ENCODE measurements at regions of chr5 and their contacts with region 1.

Region 1: GRCh38 chr5:42787845-42788244 is 23.8 kb downstream of the SELENOP start:
- DNase-seq: no peak
- H3K4me3 ChIP-seq: no peak overlapping the region
- H3K27ac ChIP-seq: no peak overlapping the region
- H3K4me1 ChIP-seq: no peaks in the 10 kb centered on the region
- H3K27me3 ChIP-seq: no peaks in the 10 kb centered on the region
- CTCF ChIP-seq: no peak
- POLR2A ChIP-seq: no peak

Region 2: DNA sequence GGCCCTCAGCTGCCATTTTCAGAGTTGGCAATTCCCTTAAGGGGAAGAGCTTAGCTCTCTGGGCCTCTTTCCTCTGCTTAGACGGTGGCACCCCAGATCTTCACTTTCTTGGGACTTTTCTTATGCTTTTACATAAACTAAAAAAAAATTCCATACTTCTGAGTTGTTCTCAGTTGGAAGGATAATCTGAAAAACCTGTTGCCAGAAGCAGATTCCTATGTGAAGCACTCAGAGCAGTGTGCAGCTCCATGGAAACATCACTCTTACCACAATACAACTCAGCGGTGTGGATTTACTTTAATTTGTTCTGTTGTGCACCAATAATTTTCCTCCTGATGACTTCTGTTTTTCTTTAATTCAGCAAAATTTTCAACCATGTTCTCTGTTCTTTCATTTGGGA is 1672.6 kb before region 1 on chr5:
- intact Hi-C with region 1: loop called (anchors 5 kb)
- DNase-seq: no peak
- H3K4me3 ChIP-seq: no peak overlapping the region
- H3K27ac ChIP-seq: peak overlapping the region in 1 of 2 donors; percentile 15
- H3K4me1 ChIP-seq: no peaks in the 10 kb centered on the region
- H3K27me3 ChIP-seq: no peaks in the 10 kb centered on the region
- CTCF ChIP-seq: no peak
- POLR2A ChIP-seq: no peak

Region 3: DNA sequence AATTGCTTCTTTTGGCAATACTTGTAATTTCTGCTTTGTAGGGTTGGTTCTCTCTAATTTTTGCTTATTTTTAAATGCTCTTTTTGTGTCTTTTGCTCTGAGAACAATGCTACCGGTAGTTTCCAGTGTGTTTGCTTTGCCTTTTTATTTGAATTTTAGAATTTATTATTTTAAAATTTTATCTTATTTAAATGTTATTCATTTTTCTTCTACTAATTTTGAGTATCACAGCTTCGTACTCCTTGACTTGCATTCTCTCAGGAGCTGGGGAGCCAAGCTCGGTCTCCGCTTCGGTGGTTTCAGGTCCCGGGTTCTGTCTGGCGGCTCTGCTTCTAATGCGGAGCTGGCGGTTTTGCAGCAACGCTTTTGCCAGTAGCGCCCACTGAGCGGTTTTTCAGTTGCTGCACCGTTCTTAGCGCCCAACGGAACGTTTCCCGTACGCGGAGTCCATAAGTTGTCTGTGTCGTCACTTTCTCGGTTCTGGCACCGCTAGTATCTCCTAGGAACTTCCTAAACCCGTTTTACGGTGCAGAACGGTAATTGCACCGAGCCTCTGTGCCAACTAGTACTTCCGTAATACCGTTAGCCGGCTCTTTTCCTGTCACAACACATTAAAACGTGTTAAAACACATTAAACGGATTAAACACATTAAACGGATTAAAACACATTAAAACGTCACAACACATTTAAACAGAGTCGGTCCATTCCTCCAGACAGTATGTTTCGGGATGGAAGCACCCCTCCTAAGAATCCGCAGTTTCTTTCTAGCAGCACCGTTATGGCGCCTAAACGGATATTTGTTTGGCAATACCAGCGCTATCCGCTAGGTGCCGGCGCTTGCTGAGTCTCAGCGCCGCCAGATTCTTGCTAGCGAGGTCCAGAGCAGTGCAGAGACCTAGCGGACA is 206.7 kb after region 1 on chr5:
- intact Hi-C with region 1: no loop called
- DNase-seq: peak; percentile 84 to 86
- H3K4me3 ChIP-seq: peak overlapping the region; percentile 19 to 42
- H3K27ac ChIP-seq: peak overlapping the region; percentile 75 to 87
- H3K4me1 ChIP-seq: no peaks in the 10 kb centered on the region
- H3K27me3 ChIP-seq: peaks cover 26 to 66% of the 10 kb centered on the region in 2 donors
- CTCF ChIP-seq: peak; percentile 73 to 88 (median 84)
- POLR2A ChIP-seq: no peak

Measured in uterus (tissue), 4 donors.